ENCODE measurements at regions of chr5 and their contacts with region 1.

Region 1: DNA sequence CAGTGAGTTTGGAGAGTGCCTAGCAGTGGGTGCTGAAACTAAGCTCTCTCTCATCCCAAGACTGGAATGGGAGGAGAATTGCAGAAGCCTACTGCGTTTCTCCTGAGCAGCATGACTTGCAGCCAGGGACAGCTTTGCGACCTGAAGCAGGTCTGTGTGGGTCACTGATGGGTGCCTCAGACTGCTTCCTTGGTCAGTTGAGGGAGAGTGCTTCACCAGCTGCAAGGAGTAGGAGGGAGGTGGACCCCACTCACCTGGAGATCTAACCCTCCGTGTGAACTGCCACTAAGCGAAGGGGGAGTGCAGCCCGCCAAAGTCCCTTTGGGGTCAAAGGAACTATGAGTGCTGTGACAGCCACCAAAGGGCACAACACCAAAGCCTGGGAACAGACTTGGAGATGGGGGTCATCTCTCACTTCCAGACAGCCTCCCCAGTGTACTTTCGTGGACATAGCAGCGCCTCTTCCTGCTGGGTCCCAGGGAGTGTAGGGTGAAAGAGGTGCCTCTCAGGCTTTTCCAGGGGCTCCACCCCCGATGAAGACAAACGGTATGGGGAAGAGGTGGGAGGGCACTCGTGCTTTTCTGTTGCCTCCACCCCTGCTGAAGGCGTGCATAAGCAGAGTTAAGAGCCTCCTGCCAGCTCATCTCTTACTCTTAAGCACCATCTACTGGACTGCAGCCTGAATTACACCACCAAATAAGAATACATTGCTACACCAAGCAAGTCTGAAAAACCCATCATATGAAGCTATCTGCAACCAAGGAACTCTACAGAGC is 34.3 kb upstream of the MACIR start:
- DNase-seq: peak; percentile 73
- ATAC-seq: peak; percentile 97
- H3K4me3 Mint-ChIP-seq: no peak overlapping the region
- H3K27ac Mint-ChIP-seq: no peak overlapping the region
- H3K4me1 Mint-ChIP-seq: peaks cover 9% of the 10 kb centered on the region
- H3K27me3 Mint-ChIP-seq: peaks cover 41% of the 10 kb centered on the region

Region 2: GRCh38 chr5:103139264-103139865 is 84.9 kb before region 1 on chr5:
- CTCF ChIA-PET with region 1: interaction called, 13 read pairs
- DNase-seq: peak; percentile 85
- ATAC-seq: peak; percentile 96
- H3K4me3 Mint-ChIP-seq: no peak overlapping the region
- H3K27ac Mint-ChIP-seq: no peak overlapping the region
- H3K4me1 Mint-ChIP-seq: peaks cover 2% of the 10 kb centered on the region
- H3K27me3 Mint-ChIP-seq: no peaks in the 10 kb centered on the region

Region 3: GRCh38 chr5:103475629-103476240 is 251.4 kb after region 1 on chr5:
- CTCF ChIA-PET with region 1: interaction called, 17 read pairs
- DNase-seq: no peak
- ATAC-seq: no peak
- H3K4me3 Mint-ChIP-seq: no peak overlapping the region
- H3K27ac Mint-ChIP-seq: no peak overlapping the region
- H3K4me1 Mint-ChIP-seq: no peaks in the 10 kb centered on the region
- H3K27me3 Mint-ChIP-seq: peaks cover 41% of the 10 kb centered on the region